Activated naive CD4-positive, alpha-beta T cell treated with anti-CD3 and anti-CD28 coated beads for 36 hours (primary cell): ENCODE measurements at regions of chr16 and their contacts with region 1.

Region 1: GRCh38 chr16:88650749-88651275 is at the start of gene CYBA:
- DNase-seq: peak; percentile 91
- H3K4me3 Mint-ChIP-seq: peak within 1 kb of the TSS; percentile 87
- H3K27ac Mint-ChIP-seq: peak within 1 kb of the TSS; percentile 95
- H3K4me1 Mint-ChIP-seq: peaks cover 18% of the 10 kb centered on the region
- H3K27me3 Mint-ChIP-seq: no peaks in the 10 kb centered on the region
- total RNA-seq, gene CYBA: 167 to 180 TPM

Region 2: GRCh38 chr16:88569985-88570690 is 80.7 kb before region 1 on chr16 and contains the start of gene ZC3H18:
- CTCF ChIA-PET with region 1: no interaction called
- intact Hi-C with region 1: loop called (anchors 1 kb)
- DNase-seq: peak; percentile 97
- H3K4me3 Mint-ChIP-seq: peak within 1 kb of the TSS; percentile 81
- H3K27ac Mint-ChIP-seq: peak within 1 kb of the TSS; percentile 84
- H3K4me1 Mint-ChIP-seq: peaks cover 41% of the 10 kb centered on the region
- H3K27me3 Mint-ChIP-seq: no peaks in the 10 kb centered on the region
- total RNA-seq, gene ZC3H18: 55.8 to 58.5 TPM

Region 3: DNA sequence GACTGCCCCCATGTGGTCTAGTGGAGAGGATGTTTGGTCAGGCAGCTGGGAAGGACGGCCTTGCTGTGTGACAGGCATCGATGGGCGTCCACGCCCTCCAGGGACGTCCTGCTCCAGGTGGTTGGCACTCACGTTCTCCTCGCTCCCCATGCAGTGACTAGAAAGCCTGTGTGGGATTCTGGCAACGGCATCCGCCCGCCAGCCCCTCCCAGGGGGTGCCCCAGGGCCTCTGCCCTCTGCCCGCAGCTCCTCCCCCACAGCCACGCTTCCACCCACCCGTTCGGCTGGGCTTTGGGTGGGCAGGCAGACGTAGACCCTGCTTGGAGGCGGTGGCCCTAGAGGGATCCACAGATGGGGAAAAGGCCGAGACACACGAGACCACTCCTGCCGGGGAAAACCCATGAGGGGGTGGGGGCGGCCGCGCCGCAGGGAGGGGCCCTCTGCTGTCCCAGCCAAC is 17.1 kb before region 1 on chr16:
- CTCF ChIA-PET with region 1: no interaction called
- intact Hi-C with region 1: loop called (anchors 2 kb)
- DNase-seq: peak; percentile 59
- H3K4me3 Mint-ChIP-seq: peak overlapping the region; percentile 52
- H3K27ac Mint-ChIP-seq: no peak overlapping the region
- H3K4me1 Mint-ChIP-seq: peaks cover 39% of the 10 kb centered on the region
- H3K27me3 Mint-ChIP-seq: peaks cover 19% of the 10 kb centered on the region

Region 4: DNA sequence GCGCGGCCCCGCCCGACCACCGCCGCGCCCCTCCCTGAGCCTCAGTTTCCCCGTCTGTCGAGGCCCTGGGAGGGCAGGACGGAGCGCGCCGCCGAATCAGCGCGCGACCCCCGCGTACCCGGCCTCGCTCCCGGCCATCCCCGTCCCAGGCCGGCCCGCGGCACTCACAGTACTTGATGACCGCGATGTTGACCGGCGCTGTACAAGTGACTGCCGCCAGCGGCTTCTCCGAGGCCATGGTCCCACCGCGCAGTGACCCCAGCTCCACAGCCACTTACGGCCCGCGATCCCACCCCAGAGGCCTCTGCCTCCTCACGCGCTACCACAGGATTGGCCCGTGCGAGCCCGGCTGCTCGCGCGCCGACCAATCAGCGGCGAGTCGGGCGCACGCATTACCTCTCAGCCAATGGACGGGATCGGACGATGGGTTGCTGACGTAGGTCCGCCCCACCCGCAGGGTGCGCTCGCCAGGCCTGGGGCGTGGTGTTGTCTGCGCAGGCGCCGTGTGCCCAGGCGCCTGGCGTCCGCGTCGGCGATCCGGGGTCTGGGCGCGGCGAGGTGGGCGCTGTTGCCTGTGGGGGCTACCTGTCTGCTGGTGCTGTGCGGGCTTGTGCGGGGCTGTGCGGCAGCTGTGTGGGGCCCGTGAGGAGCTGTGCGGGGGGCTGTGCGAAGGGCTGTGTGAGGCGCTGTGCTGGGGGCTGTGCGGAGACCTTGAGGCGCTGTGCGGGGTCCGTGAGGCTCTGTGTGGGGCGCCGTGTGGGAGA is 12.2 kb after region 1 on chr16 and contains the start of gene MVD:
- CTCF ChIA-PET with region 1: interaction called, 3 read pairs
- intact Hi-C with region 1: loop called (anchors 1 kb)
- DNase-seq: peak; percentile 97
- H3K4me3 Mint-ChIP-seq: peak within 1 kb of the TSS; percentile 90
- H3K27ac Mint-ChIP-seq: peak within 1 kb of the TSS; percentile 86
- H3K4me1 Mint-ChIP-seq: peaks cover 13% of the 10 kb centered on the region
- H3K27me3 Mint-ChIP-seq: no peaks in the 10 kb centered on the region
- total RNA-seq, gene MVD: 90.5 to 96.8 TPM

Region 5: GRCh38 chr16:88700636-88701482 is 50.0 kb after region 1 on chr16:
- CTCF ChIA-PET with region 1: no interaction called
- intact Hi-C with region 1: loop called (anchors 1 kb)
- DNase-seq: peak; percentile 98
- H3K4me3 Mint-ChIP-seq: peak overlapping the region; percentile 84
- H3K27ac Mint-ChIP-seq: peak overlapping the region; percentile 98
- H3K4me1 Mint-ChIP-seq: peaks cover 71% of the 10 kb centered on the region
- H3K27me3 Mint-ChIP-seq: no peaks in the 10 kb centered on the region